PC-9 (cell line): ENCODE measurements at regions of chr14 and their contacts with region 1.

Region 1: GRCh38 chr14:61252369-61253063 is 28.6 kb downstream of the TMEM30B start:
- DNase-seq: peak; percentile 83 to 94
- H3K4me3 ChIP-seq: no peak overlapping the region
- H3K27ac ChIP-seq: peak overlapping the region; percentile 56
- H3K4me1 ChIP-seq: peaks cover 7% of the 10 kb centered on the region
- H3K27me3 ChIP-seq: no peaks in the 10 kb centered on the region
- CTCF ChIP-seq: peak; percentile 94

Region 2: GRCh38 chr14:60195179-60195810 is 1057.2 kb before region 1 on chr14:
- CTCF ChIA-PET with region 1: no interaction called
- POLR2A ChIA-PET with region 1: no interaction called
- intact Hi-C with region 1: loop called (anchors 10 kb)
- DNase-seq: no peak
- H3K4me3 ChIP-seq: no peak overlapping the region
- H3K27ac ChIP-seq: no peak overlapping the region
- H3K4me1 ChIP-seq: peaks cover 14% of the 10 kb centered on the region
- H3K27me3 ChIP-seq: no peaks in the 10 kb centered on the region
- CTCF ChIP-seq: no peak

Region 3: DNA sequence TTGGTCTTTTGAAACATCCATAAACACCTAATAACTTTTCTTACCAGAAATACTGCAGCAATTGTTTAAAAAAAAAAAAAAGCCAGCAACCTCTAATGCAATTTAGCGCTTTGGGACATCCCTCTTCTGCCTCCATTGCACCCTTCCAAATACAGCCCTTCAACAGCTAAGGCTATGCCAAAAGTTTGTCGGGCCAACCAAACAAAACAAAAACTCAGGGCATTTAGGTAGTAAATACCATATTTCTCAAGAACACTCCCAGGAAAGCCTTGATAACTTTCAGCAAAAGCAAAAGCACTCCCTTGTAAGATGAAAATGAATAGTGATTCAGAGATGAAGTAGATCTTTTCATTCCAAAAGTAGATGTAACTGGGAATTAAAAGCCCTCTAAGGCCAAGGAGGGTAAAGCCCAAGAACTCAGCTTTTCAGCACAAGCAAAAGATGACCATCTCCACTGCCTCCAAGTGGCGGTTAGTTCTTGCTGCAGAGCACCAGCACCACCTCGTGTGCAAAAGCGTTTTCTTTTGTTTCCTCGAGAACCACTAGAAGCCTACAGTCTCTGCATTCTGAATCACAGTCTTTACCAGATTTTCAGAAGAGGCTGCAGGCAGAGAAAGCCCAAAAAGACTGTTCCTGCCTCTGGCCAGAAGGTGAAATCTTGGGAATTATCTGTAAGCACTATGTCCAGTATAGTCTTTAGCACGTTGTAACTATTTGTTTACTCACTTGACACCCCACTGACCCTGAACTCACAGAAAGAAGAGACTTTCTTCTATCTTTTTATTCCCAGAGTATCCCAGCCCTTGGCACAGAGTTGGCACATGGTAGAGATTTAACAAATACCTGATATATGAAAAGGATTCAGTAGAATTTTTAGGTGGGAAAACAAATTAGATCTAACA is 690.4 kb before region 1 on chr14:
- CTCF ChIA-PET with region 1: no interaction called
- POLR2A ChIA-PET with region 1: no interaction called
- intact Hi-C with region 1: loop called (anchors 2 kb)
- DNase-seq: peak; percentile 36 to 59
- H3K4me3 ChIP-seq: no peak overlapping the region
- H3K27ac ChIP-seq: no peak overlapping the region
- H3K4me1 ChIP-seq: no peaks in the 10 kb centered on the region
- H3K27me3 ChIP-seq: no peaks in the 10 kb centered on the region
- CTCF ChIP-seq: peak; percentile 79

Region 4: DNA sequence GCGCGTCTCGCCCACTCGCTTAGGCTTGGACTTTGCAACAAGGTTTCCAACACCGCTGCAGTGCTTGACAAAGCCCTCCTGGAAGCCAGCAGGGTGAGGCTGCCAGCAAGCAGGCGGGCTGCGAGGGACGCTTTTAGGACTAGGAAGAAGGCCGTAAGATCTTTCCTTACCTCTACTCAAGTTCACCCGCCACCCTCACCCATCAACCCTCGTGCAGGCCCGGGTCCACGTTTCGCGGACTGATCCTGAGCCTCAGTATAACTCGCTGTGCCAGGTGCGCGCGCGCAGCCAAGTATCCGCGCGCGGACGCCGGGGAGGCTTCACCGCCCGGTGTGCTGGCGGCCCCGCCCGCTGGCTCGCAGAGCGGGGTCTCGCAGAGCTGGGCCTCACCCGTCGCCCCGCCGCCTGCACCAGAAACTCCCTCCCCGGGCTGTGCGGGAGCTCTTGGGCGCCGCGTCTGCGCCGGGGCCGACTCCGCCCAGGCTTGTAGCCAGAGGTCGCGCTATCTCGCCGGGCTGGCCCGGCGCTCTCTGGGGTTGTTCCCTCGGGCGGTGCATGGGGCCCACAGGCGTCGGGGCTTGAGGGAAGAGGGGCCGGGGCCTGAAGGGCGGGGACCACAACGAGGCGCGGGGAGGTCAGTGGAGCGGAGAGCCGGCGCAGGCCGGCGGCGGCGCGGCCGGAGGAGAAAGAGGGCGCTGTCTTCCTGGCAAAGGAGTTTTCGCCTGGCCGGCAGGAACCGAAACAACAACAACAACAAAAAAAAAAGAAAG is 595.6 kb before region 1 on chr14:
- CTCF ChIA-PET with region 1: no interaction called
- POLR2A ChIA-PET with region 1: no interaction called
- intact Hi-C with region 1: loop called (anchors 2 kb)
- DNase-seq: peak in 1 of 2 experiments; percentile 80
- H3K4me3 ChIP-seq: peak overlapping the region; percentile 63
- H3K27ac ChIP-seq: no peak overlapping the region
- H3K4me1 ChIP-seq: 0 out of 2 replicates have a peak, but pooled peaks cover 6% of the 10 kb centered on the region
- H3K27me3 ChIP-seq: no peaks in the 10 kb centered on the region
- CTCF ChIP-seq: peak; percentile 64

Region 5: GRCh38 chr14:60980811-60981632 is 271.5 kb before region 1 on chr14 and contains the starts of genes SLC38A6 and TRMT5:
- CTCF ChIA-PET with region 1: interaction called, 3 read pairs
- POLR2A ChIA-PET with region 1: no interaction called
- intact Hi-C with region 1: loop called (anchors 5 kb)
- DNase-seq: peak; percentile 92 to 95
- H3K4me3 ChIP-seq: peak within 1 kb of the TSS; percentile 99
- H3K27ac ChIP-seq: peak within 1 kb of the TSS; percentile 78
- H3K4me1 ChIP-seq: peaks cover 36% of the 10 kb centered on the region
- H3K27me3 ChIP-seq: no peaks in the 10 kb centered on the region
- CTCF ChIP-seq: no peak
- total RNA-seq, gene SLC38A6: 44.7 and 45.5 TPM in 2 replicates
- total RNA-seq, gene TRMT5: 17.3 and 17.6 TPM in 2 replicates

Region 6: DNA sequence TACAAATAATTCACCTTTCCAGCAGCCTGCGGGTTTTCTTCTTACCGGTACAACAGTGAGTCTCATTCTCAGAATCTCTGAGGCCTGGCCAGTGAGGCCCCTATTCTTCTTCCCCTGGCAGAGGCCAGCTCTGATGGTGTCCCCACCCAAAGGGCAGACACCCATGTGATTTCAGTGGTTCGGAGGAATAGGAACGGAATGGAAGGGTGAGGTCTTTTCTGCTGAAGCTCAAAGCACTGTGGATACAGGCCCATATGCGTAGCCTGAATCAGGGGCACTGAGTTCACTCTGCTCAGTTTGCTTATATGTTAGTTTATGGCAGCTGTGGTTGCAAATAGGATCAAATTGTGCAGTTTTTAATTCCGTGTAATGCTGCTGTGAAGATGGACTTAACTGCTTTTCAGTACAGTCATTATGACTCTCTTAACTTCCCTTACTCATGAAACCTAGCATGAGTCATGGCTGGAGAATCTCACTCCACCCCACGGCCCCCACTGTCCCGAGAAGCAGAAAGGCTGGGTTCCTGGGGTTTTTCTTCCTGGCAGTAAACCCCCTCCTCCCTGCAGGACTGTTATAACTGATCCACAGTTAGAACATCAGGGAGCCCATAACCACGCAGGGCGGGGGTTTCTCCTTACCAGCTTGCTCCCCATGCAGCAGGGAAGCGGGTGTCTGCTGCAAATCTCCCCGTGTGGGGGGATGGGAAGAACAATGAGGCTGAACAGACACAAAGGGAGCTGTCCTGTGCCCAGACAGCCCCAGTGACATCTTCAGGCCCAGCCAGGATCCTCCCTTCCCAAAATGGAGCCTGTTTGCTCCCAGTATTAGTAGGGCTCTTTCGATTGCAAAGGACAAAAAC is 148.8 kb before region 1 on chr14:
- CTCF ChIA-PET with region 1: no interaction called
- POLR2A ChIA-PET with region 1: no interaction called
- intact Hi-C with region 1: loop called (anchors 5 kb)
- DNase-seq: peak; percentile 85 to 89
- H3K4me3 ChIP-seq: 0 out of 2 replicates have a peak overlapping the region, but pooled peaks have one; percentile 1
- H3K27ac ChIP-seq: peak overlapping the region; percentile 98
- H3K4me1 ChIP-seq: peaks cover 37% of the 10 kb centered on the region
- H3K27me3 ChIP-seq: no peaks in the 10 kb centered on the region
- CTCF ChIP-seq: no peak

Region 7: GRCh38 chr14:61213191-61213621 is 39.3 kb before region 1 on chr14:
- CTCF ChIA-PET with region 1: no interaction called
- POLR2A ChIA-PET with region 1: no interaction called
- intact Hi-C with region 1: no loop called
- DNase-seq: no peak
- H3K4me3 ChIP-seq: no peak overlapping the region
- H3K27ac ChIP-seq: no peak overlapping the region
- H3K4me1 ChIP-seq: no peaks in the 10 kb centered on the region
- H3K27me3 ChIP-seq: 0 out of 2 replicates have a peak, but pooled peaks cover 1% of the 10 kb centered on the region
- CTCF ChIP-seq: no peak

Region 8: GRCh38 chr14:61662437-61663311 is 410.2 kb after region 1 on chr14:
- CTCF ChIA-PET with region 1: no interaction called
- POLR2A ChIA-PET with region 1: no interaction called
- intact Hi-C with region 1: no loop called
- DNase-seq: peak; percentile 69 to 90
- H3K4me3 ChIP-seq: peak overlapping the region; percentile 3; the same call in 1 of the 2 replicates
- H3K27ac ChIP-seq: peak overlapping the region; percentile 91
- H3K4me1 ChIP-seq: peaks cover 68% of the 10 kb centered on the region
- H3K27me3 ChIP-seq: no peaks in the 10 kb centered on the region
- CTCF ChIP-seq: no peak